Activated naive CD4-positive, alpha-beta T cell treated with anti-CD3 and anti-CD28 coated beads for 36 hours (primary cell): ENCODE measurements at regions of chr15 and their contacts with region 1.

Region 1: DNA sequence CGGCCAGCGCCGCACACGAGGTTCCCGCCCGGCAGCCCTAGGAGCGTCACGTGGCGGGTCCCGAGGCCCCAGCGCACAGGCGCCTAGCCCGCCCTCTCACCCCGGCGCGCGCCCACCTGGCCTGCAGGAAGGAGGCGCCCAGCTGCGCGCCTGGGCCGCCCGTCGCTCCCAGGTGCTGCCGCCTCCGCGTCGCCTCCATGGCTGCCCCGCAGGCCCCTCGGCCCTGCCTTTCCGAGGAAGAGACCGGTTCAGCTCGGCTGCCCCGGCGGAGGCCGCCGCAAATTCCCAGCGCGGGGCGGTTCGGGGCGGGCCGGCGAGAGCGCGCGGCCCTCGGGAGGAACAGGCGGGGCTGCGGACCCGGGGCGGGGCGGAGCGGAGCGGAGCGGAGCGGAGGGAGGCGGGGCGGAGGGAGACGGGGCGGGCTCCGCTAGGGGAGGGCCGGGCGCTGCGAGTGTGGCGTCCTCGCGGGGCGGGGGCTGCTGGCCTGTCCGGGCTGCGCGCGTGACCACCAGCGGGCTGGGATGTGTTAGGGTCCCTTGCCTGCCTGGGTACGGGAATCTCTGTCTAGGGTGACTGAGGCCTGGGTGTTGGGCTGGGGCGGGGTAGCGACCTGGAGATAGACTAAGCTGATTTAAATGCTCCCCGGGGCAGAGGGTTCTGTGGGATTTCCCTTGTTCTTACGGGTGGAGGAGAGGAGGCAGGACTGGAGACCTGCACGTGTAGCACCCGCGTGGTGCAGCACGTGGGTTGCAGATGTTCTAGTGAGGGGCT is at the start of gene CLN6:
- DNase-seq: peak; percentile 75
- H3K4me3 Mint-ChIP-seq: peak within 1 kb of the TSS; percentile 85
- H3K27ac Mint-ChIP-seq: peak within 1 kb of the TSS; percentile 80
- H3K4me1 Mint-ChIP-seq: peaks cover 43% of the 10 kb centered on the region
- H3K27me3 Mint-ChIP-seq: no peaks in the 10 kb centered on the region
- total RNA-seq, gene CLN6: 30.5 to 34.2 TPM

Region 2: DNA sequence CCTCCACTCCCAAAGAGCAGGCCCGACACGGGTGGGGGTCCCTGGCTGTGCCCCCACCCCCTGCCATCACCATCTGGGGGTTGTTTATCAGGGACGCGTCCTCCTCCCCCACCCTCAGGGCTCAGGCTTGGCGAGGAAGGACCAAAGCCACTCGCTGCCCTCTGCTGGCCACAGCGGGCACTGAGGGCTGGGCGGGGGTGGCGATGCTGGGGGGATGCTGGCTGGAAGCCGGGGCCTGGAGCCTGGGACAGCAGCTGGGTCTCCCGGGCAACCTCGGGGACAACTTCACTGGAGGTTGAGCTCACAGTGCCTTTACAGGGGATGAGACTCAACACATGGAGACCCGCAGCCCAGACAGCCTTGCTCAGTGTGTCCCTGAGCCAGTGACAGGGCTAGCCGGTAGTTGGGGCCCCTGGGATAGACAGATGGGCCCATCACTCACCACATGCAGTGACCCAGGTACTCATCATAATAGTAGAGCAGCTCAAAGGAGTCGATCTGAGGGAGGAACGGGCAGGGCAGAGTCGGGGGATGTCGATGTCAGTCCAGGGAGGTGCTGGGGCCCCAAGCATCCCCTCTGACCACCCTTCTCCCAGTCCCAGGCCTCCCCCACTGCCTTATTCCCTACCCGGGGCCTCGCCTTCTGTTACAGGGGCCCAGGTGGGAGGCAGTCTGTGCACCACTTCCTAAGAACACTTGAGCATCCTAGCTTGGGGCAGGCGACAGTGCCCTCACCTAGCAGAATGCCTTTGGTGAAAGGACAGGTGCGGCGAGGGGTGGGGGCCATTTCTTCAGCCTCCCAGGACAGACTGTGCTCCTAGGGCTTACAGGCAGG is 18.5 kb before region 1 on chr15:
- CTCF ChIA-PET with region 1: interaction called, 3 read pairs
- intact Hi-C with region 1: loop called (anchors 2 kb)
- DNase-seq: peak; percentile 56
- H3K4me3 Mint-ChIP-seq: no peak overlapping the region
- H3K27ac Mint-ChIP-seq: no peak overlapping the region
- H3K4me1 Mint-ChIP-seq: peaks cover 25% of the 10 kb centered on the region
- H3K27me3 Mint-ChIP-seq: no peaks in the 10 kb centered on the region

Region 3: DNA sequence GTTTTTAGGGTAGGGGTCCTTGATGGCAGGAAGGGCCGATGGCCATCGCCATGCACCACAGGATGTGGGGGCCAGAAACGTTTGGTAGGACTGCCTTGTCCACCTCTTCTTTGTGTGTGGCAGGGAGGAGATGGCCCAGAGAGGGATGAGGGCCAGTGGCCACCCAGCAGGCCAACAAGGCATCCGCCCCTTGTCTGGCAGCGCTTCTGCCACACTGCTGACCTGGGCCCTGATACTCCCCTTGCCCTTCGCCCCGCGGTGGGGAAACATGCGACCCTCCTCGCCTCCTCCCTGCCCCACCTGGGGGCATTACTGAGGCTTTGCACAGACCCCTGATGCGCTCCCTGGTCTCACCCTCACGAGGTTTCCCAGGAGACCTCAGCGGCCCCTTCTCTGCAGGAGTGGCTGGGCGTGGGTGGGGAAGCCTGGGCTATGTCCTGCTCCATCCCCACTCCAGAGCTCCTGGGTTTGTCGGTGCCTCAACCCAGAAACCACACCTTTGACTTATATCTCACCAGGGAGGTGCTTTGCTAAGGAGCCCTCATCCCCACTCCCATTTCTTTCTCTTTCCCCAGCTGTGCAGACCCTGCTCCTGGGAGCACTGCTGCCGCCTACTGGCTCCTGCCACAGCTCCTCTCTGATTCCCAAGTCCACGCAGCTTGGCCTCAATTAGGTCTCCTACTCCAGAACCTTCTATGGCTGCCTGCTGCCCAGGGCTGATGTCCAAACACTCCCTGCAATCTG is 86.7 kb after region 1 on chr15:
- CTCF ChIA-PET with region 1: no interaction called
- intact Hi-C with region 1: no loop called
- DNase-seq: no peak
- H3K4me3 Mint-ChIP-seq: no peak overlapping the region
- H3K27ac Mint-ChIP-seq: no peak overlapping the region
- H3K4me1 Mint-ChIP-seq: no peaks in the 10 kb centered on the region
- H3K27me3 Mint-ChIP-seq: no peaks in the 10 kb centered on the region